ENCODE measurements at regions of chr14 and their contacts with region 1.

Region 1: GRCh38 chr14:81220830-81221578 is at the start of gene GTF2A1:
- DNase-seq: peak; percentile 98
- H3K4me3 Mint-ChIP-seq: peak within 1 kb of the TSS; percentile 98
- H3K27ac Mint-ChIP-seq: peak within 1 kb of the TSS; percentile 100
- H3K4me1 Mint-ChIP-seq: peaks cover 27% of the 10 kb centered on the region
- H3K27me3 Mint-ChIP-seq: no peaks in the 10 kb centered on the region
- total RNA-seq, gene GTF2A1: 42.6 and 43.4 TPM in 2 replicates

Region 2: GRCh38 chr14:80954687-80955299 is 266.2 kb before region 1 on chr14:
- intact Hi-C with region 1: loop called (anchors 1 kb)
- DNase-seq: peak; percentile 93
- H3K4me3 Mint-ChIP-seq: peak overlapping the region; percentile 91
- H3K27ac Mint-ChIP-seq: peak overlapping the region; percentile 68
- H3K4me1 Mint-ChIP-seq: peaks cover 45% of the 10 kb centered on the region
- H3K27me3 Mint-ChIP-seq: peaks cover 44% of the 10 kb centered on the region

Region 3: DNA sequence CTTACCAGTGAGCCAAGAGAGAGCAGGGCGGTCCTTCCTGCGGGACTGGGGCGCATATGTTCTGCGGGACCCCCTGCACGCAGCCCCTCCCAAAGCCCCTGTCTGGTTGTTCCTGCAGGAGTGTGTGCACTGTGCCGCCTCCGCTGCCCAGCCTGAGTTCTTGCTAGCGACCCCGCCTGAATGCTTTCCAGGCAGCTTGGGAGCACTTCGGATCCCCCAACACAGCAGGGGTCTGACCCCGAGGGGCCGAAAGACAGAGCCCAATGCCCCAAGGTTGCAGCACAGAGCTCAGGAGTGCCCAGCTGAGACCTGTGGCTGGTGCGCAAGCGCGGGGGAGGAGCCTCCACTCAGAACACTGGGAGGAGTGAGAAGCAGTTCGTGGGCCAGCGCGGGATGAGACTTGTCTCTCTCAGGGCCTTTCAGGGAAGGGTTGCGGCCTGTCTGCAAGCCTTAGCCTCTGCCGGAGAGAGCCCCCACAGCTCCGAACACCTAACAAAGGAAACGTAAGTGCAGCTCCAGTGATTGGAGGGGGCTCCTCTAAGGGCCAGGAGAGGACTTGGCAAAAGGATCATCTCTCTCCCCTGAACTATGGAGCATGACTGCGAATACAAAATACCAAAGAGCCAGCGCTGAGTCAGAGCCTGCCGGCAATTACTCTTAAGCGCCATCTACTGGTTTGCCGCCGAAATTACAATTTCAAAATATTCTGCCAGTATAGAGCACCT is 50.7 kb before region 1 on chr14:
- intact Hi-C with region 1: loop called (anchors 1 kb)
- DNase-seq: peak; percentile 96
- H3K4me3 Mint-ChIP-seq: peak overlapping the region; percentile 96
- H3K27ac Mint-ChIP-seq: peak overlapping the region; percentile 99
- H3K4me1 Mint-ChIP-seq: peaks cover 40% of the 10 kb centered on the region
- H3K27me3 Mint-ChIP-seq: no peaks in the 10 kb centered on the region

Region 4: GRCh38 chr14:81247146-81247766 is 26.3 kb after region 1 on chr14:
- intact Hi-C with region 1: no loop called
- DNase-seq: no peak
- H3K4me3 Mint-ChIP-seq: no peak overlapping the region
- H3K27ac Mint-ChIP-seq: no peak overlapping the region
- H3K4me1 Mint-ChIP-seq: no peaks in the 10 kb centered on the region
- H3K27me3 Mint-ChIP-seq: no peaks in the 10 kb centered on the region

Region 5: DNA sequence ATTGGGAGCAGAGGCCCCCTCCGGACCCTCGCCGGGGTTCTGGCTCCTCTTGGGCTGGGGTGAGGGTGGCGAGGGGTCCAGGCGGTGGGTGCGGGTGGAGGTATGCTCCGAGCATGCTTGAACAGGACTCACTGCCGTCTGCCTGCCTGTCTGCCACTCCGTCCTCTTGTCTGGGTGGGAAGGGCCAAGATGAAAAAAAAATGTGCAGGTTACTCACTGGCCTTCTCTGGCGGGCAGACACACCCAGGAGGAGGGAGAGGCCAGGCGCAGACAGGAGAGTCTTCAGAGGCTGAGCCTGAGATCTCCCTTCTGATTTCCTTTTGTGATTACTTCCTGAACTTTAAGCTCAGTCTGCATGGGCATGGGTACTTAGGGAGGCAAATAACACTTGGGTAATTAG is 103.0 kb after region 1 on chr14:
- intact Hi-C with region 1: no loop called
- DNase-seq: no peak
- H3K4me3 Mint-ChIP-seq: no peak overlapping the region
- H3K27ac Mint-ChIP-seq: no peak overlapping the region
- H3K4me1 Mint-ChIP-seq: no peaks in the 10 kb centered on the region
- H3K27me3 Mint-ChIP-seq: peaks cover 5% of the 10 kb centered on the region

Region 6: DNA sequence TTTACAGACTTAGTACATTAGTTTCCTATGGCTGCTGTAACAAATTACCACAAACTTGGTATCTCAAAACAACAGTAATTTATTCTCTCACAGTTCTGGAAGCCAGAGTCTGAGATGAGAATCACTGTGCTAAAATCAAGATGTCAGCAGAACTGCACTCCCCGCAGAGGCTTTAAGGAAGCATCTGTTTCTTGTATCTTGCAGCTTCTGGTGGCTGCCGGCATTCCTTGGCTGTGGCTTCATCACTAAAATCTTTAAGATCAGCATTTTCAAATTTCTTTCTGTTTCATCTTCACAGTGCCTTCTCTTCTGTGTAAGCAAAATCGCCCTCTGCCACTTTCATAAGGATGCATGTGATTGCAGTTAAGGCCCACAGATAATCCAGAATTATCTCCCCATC is 169.7 kb after region 1 on chr14:
- intact Hi-C with region 1: no loop called
- DNase-seq: no peak
- H3K4me3 Mint-ChIP-seq: no peak overlapping the region
- H3K27ac Mint-ChIP-seq: no peak overlapping the region
- H3K4me1 Mint-ChIP-seq: no peaks in the 10 kb centered on the region
- H3K27me3 Mint-ChIP-seq: peaks cover 1% of the 10 kb centered on the region

Region 7: GRCh38 chr14:81464247-81465002 is 243.4 kb after region 1 on chr14:
- intact Hi-C with region 1: loop called (anchors 2 kb)
- DNase-seq: peak; percentile 93
- H3K4me3 Mint-ChIP-seq: peak overlapping the region; percentile 85
- H3K27ac Mint-ChIP-seq: peak overlapping the region; percentile 85
- H3K4me1 Mint-ChIP-seq: peaks cover 6% of the 10 kb centered on the region
- H3K27me3 Mint-ChIP-seq: no peaks in the 10 kb centered on the region

Region 8: DNA sequence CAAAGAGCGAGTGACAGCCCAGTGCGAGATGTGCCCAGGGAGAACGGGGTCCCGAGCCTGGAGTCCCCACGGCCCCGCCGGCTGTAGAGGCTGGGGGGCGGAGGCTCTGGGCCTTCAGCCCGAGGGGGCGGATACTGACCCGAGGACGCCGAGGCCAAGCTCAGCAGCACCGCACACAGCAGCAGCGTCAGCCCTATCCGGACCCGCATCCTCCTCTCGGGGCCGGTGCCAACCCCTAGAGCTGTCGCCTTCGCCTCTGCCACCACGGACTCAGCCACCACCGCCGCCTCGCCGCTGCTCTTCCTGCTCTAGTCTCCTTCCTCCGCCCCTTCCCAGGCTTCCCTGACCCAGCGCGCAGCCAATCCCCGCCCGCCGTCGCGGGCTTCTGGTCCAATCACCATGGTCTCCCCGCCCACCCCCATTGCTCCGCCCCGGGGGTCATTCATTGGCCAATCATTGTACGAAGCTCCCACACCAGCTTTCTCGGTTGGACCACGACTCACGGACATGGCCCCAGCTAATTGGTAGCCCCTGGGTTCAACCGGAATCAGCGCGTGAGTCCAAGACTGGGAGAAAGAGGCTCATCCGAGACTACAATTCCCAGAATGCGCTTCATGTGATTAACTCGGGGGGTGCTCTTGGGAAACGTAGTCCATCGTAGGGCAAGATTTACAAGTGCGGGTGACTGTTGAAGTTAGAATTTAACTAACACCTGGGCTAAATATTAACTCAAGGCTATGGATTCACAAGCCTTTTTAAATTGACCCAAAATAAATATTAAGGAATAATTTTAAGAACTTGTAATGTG is 312.7 kb after region 1 on chr14 and contains the start of gene SEL1L:
- intact Hi-C with region 1: loop called (anchors 1 kb)
- DNase-seq: peak; percentile 100
- H3K4me3 Mint-ChIP-seq: peak within 1 kb of the TSS; percentile 98
- H3K27ac Mint-ChIP-seq: peak within 1 kb of the TSS; percentile 91
- H3K4me1 Mint-ChIP-seq: peaks cover 33% of the 10 kb centered on the region
- H3K27me3 Mint-ChIP-seq: peaks cover 3% of the 10 kb centered on the region
- total RNA-seq, gene SEL1L: 57.4 and 58.8 TPM in 2 replicates